AG04450 (cell line): ENCODE measurements at regions of chr2 and their contacts with region 1.

Region 1: GRCh38 chr2:159118115-159118858 is 149.8 kb downstream of the TANC1 start:
- DNase-seq: peak; percentile 77
- H3K4me3 ChIP-seq: no peak overlapping the region
- H3K27ac ChIP-seq: no peak overlapping the region
- H3K27me3 ChIP-seq: no peaks in the 10 kb centered on the region
- CTCF ChIP-seq: peak; percentile 92

Region 2: GRCh38 chr2:158969715-158970245 is 148.5 kb before region 1 on chr2:
- CTCF ChIA-PET with region 1: interaction called, 14 read pairs
- POLR2A ChIA-PET with region 1: interaction called, 4 read pairs
- DNase-seq: no peak
- H3K4me3 ChIP-seq: peak overlapping the region; percentile 83
- H3K27ac ChIP-seq: no peak overlapping the region
- H3K27me3 ChIP-seq: no peaks in the 10 kb centered on the region
- CTCF ChIP-seq: no peak

Region 3: GRCh38 chr2:159030674-159031380 is 87.5 kb before region 1 on chr2:
- CTCF ChIA-PET with region 1: interaction called, 14 read pairs
- POLR2A ChIA-PET with region 1: interaction called, 6 read pairs
- DNase-seq: no peak
- H3K4me3 ChIP-seq: no peak overlapping the region
- H3K27ac ChIP-seq: peak overlapping the region; percentile 74
- H3K27me3 ChIP-seq: no peaks in the 10 kb centered on the region
- CTCF ChIP-seq: no peak

Region 4: DNA sequence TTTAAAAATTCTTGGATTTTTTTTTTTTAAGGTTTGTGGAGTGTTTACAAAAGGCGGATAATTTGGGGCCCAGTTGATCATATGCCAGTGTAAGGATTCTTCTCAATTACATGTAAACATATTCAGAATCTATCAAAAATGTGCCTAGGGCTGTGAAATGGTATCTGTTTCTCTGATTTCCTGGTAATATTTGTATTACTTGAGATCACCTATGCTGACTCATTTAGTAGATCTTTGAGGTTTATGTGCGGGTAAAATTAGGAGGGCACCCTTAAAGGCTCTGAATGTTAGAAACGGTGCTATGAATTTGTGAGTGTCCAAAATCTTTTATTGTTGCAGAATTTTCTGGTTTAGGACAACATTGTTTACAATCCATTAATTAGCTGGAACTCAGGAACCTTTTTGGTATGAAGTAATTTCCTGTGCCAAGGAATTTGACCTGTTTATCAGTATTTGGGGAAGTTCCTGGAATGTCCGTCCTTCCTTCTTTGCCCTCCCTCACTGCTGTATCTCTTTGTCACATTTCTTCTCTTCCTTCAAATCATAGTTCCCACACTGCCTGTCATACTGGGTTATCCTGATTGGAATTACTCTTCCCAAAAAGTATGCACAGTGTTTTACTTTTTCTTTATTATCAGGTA is 19.4 kb before region 1 on chr2:
- CTCF ChIA-PET with region 1: interaction called, 17 read pairs
- POLR2A ChIA-PET with region 1: no interaction called
- DNase-seq: no peak
- H3K4me3 ChIP-seq: no peak overlapping the region
- H3K27ac ChIP-seq: no peak overlapping the region
- H3K27me3 ChIP-seq: no peaks in the 10 kb centered on the region
- CTCF ChIP-seq: no peak

Region 5: GRCh38 chr2:159140070-159140769 is 21.9 kb after region 1 on chr2:
- CTCF ChIA-PET with region 1: interaction called, 15 read pairs
- POLR2A ChIA-PET with region 1: interaction called, 3 read pairs
- DNase-seq: peak; percentile 61
- H3K4me3 ChIP-seq: no peak overlapping the region
- H3K27ac ChIP-seq: peak overlapping the region; percentile 11
- H3K27me3 ChIP-seq: no peaks in the 10 kb centered on the region
- CTCF ChIP-seq: no peak